Ovary (tissue), 10 donors: ENCODE measurements at regions of chr9 and their contacts with region 1.

Region 1: GRCh38 chr9:69421908-69422801 is 97.1 kb downstream of the ENTREP1 start:
- DNase-seq: peak; percentile 48 to 64 (median 59)
- H3K4me3 ChIP-seq: no peak overlapping the region
- H3K27ac ChIP-seq: no peak overlapping the region
- H3K4me1 ChIP-seq: no peaks in the 10 kb centered on the region
- H3K27me3 ChIP-seq: no peaks in the 10 kb centered on the region
- CTCF ChIP-seq: peak; percentile 68 to 75 (median 74)
- EP300 ChIP-seq: no peak
- POLR2A ChIP-seq: no peak

Region 2: GRCh38 chr9:69532396-69532795 is 110.2 kb after region 1 on chr9:
- intact Hi-C with region 1: loop called in 1 of 4 experiments (anchors 10 kb)
- DNase-seq: no peak
- H3K4me3 ChIP-seq: no peak overlapping the region
- H3K27ac ChIP-seq: no peak overlapping the region
- H3K4me1 ChIP-seq: no peaks in the 10 kb centered on the region
- H3K27me3 ChIP-seq: no peaks in the 10 kb centered on the region
- CTCF ChIP-seq: no peak
- EP300 ChIP-seq: no peak
- POLR2A ChIP-seq: no peak

Region 3: GRCh38 chr9:69549310-69550202 is 127.4 kb after region 1 on chr9:
- intact Hi-C with region 1: loop called in 3 of 4 experiments (anchors 5 kb)
- DNase-seq: no peak
- H3K4me3 ChIP-seq: no peak overlapping the region
- H3K27ac ChIP-seq: no peak overlapping the region
- H3K4me1 ChIP-seq: no peaks in the 10 kb centered on the region
- H3K27me3 ChIP-seq: no peaks in the 10 kb centered on the region
- CTCF ChIP-seq: peak; percentile 23 to 66 (median 41)
- EP300 ChIP-seq: no peak
- POLR2A ChIP-seq: no peak

Region 4: DNA sequence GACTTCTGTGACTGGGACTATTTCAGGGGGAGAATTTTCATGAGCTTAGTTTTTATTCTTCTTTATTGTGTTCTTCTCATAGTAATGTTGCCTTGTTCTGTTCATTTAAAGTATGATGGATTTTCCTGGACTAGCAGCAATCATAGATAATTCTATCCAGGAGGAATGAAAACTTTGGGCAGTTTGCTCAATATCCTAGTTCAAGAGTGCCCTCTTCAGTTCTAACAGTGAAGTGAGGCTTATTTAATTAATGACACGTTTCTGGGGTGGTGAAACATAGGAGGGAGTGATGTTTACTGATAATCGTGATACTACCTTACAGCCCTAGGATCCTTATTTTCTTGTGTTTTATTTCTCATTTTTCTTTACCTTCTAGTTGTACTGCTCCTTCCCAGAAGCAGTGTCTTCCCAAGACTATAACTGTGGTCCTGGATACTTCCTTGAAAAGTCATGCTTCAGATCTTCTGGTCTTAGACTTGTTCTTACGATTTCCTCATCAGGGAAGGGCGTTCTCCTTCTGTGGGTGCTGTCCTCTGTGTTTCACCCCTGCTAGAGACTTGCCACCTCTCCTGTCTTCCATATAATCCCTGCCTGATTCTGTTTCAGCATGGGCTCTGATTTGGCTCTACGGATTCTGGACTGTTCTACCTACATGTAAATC is 455.8 kb after region 1 on chr9:
- intact Hi-C with region 1: loop called in 1 of 4 experiments (anchors 5 kb)
- DNase-seq: no peak
- H3K4me3 ChIP-seq: no peak overlapping the region
- H3K27ac ChIP-seq: no peak overlapping the region
- H3K4me1 ChIP-seq: peaks cover 2% of the 10 kb centered on the region
- H3K27me3 ChIP-seq: no peaks in the 10 kb centered on the region
- CTCF ChIP-seq: peak in 1 of 3 donors; percentile 37
- EP300 ChIP-seq: no peak
- POLR2A ChIP-seq: no peak

Region 5: DNA sequence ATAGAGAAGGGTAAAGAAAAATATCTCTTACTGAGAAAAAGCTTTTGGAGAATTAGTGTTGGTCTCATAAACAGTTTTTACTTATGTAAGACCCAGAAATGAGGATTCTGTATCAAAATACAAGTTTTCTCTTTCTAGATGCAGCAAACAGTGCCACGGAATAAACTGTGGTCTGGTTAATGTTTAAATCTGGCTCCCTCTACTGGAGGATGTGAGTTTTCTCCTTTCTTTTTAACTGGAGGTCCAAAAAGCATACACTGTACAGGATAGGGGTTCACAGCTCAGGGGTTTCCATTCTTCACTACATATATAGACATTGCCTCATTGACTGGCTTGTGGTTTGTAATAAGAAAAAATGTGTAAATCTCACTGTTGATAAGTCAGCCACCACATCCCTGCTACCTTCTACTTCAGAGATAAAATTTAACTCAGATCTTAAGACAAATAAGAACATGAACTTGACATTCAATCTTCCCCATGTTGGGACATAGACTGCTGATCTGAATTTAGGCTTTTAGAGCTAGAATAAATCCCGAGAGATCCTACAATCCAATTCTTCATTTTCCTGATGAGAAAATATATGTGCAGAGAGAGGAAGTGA is 497.4 kb after region 1 on chr9:
- intact Hi-C with region 1: loop called in 2 of 4 experiments (anchors 5 to 10 kb)
- DNase-seq: no peak
- H3K4me3 ChIP-seq: no peak overlapping the region
- H3K27ac ChIP-seq: no peak overlapping the region
- H3K4me1 ChIP-seq: no peaks in the 10 kb centered on the region
- H3K27me3 ChIP-seq: no peaks in the 10 kb centered on the region
- CTCF ChIP-seq: peak in 2 of 3 donors; percentile 50 to 58
- EP300 ChIP-seq: no peak
- POLR2A ChIP-seq: no peak